Esophagus muscularis mucosa (tissue), 4 donors: ENCODE measurements at regions of chr2 and their contacts with region 1.

Region 1: DNA sequence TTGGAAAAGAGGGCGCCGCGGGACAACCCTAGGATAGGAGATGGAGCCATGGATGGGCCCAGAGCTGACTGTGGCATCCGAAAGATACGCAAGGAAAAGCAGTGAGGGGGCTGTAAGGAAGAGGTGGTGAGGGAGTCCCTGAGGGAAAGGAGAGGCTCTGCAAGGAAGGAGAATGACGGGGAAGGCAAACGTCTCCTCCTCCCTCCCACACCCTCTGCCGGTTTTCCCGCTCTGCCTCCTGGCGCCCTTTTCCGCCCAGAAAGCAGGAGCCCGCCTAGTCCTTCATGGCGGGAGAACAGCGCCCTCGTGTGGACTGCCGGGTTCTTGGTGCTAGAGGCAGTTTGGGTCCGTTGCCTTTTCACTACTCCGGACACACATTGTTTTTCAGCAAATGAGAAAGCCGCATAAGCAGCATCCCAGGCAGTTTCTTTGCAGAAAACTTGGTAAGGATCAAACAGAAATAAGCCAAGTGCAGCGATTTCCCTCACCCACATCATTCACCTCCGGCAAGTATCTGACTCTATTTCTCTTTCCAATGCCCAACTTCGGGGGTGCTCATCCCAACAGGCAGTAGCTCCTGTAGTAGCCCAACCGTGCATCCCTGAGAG is 200.4 kb downstream of the INO80D start:
- DNase-seq: peak; percentile 97
- H3K4me3 ChIP-seq: no peak overlapping the region
- H3K27ac ChIP-seq: peak overlapping the region; percentile 49 to 81 (median 72)
- H3K4me1 ChIP-seq: peaks cover 0 to 55% (median 29%) of the 10 kb centered on the region in 4 donors
- H3K27me3 ChIP-seq: no peaks in the 10 kb centered on the region
- CTCF ChIP-seq: peak; percentile 91 to 97 (median 94)
- EP300 ChIP-seq: no peak
- POLR2A ChIP-seq: no peak

Region 2: GRCh38 chr2:205685314-205686055 is 200.1 kb before region 1 on chr2:
- intact Hi-C with region 1: loop called (anchors 5 kb)
- DNase-seq: peak; percentile 91
- H3K4me3 ChIP-seq: peak overlapping the region; percentile 76 to 95 (median 80)
- H3K27ac ChIP-seq: peak overlapping the region; percentile 92 to 98 (median 96)
- H3K4me1 ChIP-seq: peaks cover 36 to 71% (median 65%) of the 10 kb centered on the region in 4 donors
- H3K27me3 ChIP-seq: no peaks in the 10 kb centered on the region
- CTCF ChIP-seq: no peak
- EP300 ChIP-seq: no peak
- POLR2A ChIP-seq: no peak

Region 3: DNA sequence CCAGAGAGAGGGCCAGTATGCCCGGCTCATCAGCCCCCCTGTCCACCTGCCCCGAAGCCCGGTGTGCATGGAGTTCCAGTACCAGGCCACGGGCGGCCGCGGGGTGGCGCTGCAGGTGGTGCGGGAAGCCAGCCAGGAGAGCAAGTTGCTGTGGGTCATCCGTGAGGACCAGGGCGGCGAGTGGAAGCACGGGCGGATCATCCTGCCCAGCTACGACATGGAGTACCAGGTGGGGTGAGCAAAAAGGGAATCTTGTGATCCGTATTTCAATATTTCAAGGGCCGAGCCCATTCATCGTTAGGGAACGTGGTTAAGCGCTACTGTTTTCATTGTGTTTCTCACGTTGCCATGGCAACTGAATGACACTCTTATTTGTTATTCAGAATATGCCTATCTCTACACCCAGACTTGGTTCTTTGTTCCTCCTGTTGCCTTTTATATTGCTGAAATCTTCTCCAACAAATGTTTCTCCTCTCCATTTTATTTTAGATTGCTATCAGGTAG is 121.8 kb before region 1 on chr2:
- intact Hi-C with region 1: loop called (anchors 2 kb)
- DNase-seq: no peak
- H3K4me3 ChIP-seq: peak overlapping the region in 1 of 4 donors; percentile 29
- H3K27ac ChIP-seq: peak overlapping the region; percentile 80 to 98 (median 90)
- H3K4me1 ChIP-seq: peaks cover 22 to 100% (median 94%) of the 10 kb centered on the region in 4 donors
- H3K27me3 ChIP-seq: peaks cover 0 to 4% (median 0%) of the 10 kb centered on the region in 4 donors
- CTCF ChIP-seq: peak; percentile 70 to 81 (median 76)
- EP300 ChIP-seq: no peak
- POLR2A ChIP-seq: no peak